A549 (cell line): ENCODE measurements at regions of chr3 and their contacts with region 1.

Region 1: GRCh38 chr3:53269888-53270880 is 14.4 kb upstream of the TKT start:
- DNase-seq: peak; percentile 91 to 100
- ATAC-seq: peak; percentile 97 to 99
- H3K4me3 ChIP-seq: peak overlapping the region; percentile 25; the same call in 1 of the 3 replicates
- H3K27ac ChIP-seq: peak overlapping the region; percentile 99 to 100
- H3K4me1 ChIP-seq: peaks cover 61% of the 10 kb centered on the region
- CTCF ChIP-seq: no peak
- EP300 ChIP-seq: peak; percentile 87 to 92; a peak in 4 of 5 replicates
- POLR2A ChIP-seq: 0 out of 2 replicates have a peak, but pooled peaks have one; percentile 10
- RAD21 ChIP-seq: peak; percentile 30 to 40; a peak in 3 of 5 replicates

Region 2: GRCh38 chr3:53255775-53256703 is 14.1 kb before region 1 on chr3 and contains the start of gene TKT:
- CTCF ChIA-PET with region 1: interaction called, 4 read pairs
- POLR2A ChIA-PET with region 1: interaction called, 22 read pairs
- DNase-seq: peak; percentile 67 to 82
- ATAC-seq: peak; percentile 65 to 67
- H3K4me3 ChIP-seq: peak within 1 kb of the TSS; percentile 100
- H3K27ac ChIP-seq: peak within 1 kb of the TSS; percentile 99 to 100
- H3K4me1 ChIP-seq: peaks cover 29% of the 10 kb centered on the region
- CTCF ChIP-seq: no peak
- EP300 ChIP-seq: no peak
- POLR2A ChIP-seq: peak; percentile 99
- RAD21 ChIP-seq: no peak
- polyA plus RNA-seq, gene TKT: 628 and 740 TPM in 2 replicates